GM10248 (cell line): ENCODE measurements at regions of chr22 and their contacts with region 1.

Region 1: DNA sequence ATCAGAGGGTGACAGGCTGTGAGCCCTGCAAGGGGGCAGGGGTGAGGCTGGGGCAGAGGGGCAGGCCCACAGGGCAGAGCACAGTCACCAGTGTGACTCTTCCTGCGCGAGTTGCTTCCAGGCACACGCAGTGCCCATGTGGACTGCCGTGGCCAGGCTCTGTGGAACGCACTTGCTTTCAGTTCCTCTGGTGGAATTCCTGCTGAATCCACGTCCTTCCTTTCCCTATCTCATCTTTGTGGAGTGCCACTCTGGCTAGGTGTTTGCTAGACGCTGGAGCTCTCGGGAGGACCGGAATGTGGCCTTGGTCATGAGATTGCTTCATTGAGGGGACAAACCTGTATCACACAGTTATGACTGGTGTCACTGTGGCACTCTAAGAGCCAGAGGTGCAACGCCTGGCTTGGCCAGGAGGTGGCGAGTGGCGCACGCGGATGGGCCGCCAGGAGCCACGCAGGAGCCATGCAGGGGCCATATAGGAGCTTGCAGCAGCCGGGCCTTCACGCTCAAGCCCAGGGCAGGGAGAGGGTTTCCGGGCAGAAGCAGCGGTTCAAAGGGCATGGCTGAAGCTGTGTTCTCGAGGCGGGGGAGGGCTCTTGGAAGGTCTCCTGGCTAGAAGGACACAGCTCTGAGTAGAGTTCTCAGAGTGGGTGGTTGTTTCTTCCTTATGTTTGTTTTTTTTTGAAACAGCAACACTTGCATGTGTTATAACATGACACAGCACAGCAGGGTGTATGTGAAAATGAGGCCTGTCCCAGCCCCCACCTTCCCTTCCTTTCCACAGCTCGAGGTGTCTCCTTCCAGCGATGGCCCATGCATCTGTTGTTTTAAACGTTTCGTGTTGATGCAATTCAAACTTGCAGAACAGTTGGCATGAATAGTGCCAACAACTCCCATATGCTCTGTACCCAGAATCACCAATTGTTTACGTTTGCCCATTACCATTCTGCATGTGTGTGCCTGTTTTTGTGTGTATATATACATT is 36.2 kb downstream of the TBC1D22A start:
- DNase-seq: peak; percentile 83
- CTCF ChIP-seq: peak; percentile 95

Region 2: GRCh38 chr22:46737976-46738646 is 60.5 kb before region 1 on chr22 and contains the start of gene CERK:
- CTCF ChIA-PET with region 1: interaction called, 21 read pairs
- POLR2A ChIA-PET with region 1: no interaction called
- DNase-seq: peak; percentile 84
- CTCF ChIP-seq: no peak

Region 3: GRCh38 chr22:46769191-46769675 is 29.4 kb before region 1 on chr22:
- CTCF ChIA-PET with region 1: interaction called, 138 read pairs
- POLR2A ChIA-PET with region 1: no interaction called
- DNase-seq: peak; percentile 40
- CTCF ChIP-seq: no peak

Region 4: DNA sequence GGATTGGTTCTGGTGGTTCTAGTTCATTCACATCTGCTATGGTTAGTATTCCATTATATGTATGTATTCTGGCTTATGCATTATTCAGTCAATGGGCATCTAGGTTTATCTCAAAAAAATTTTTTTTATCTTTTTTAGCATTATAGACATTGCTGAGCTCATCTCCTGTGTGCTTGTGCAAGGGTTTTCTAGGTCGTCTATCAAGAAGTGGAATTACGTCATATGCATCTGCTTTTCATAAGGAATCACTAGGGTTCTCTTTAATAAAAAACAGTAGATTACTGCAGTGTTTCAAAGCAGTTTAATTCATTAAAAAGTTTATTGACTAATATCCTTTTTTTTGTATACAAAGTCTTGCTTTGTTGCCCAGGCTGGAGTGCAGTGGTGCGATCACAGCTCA is 14.9 kb before region 1 on chr22:
- CTCF ChIA-PET with region 1: interaction called, 39 read pairs
- POLR2A ChIA-PET with region 1: no interaction called
- DNase-seq: no peak
- CTCF ChIP-seq: no peak

Region 5: DNA sequence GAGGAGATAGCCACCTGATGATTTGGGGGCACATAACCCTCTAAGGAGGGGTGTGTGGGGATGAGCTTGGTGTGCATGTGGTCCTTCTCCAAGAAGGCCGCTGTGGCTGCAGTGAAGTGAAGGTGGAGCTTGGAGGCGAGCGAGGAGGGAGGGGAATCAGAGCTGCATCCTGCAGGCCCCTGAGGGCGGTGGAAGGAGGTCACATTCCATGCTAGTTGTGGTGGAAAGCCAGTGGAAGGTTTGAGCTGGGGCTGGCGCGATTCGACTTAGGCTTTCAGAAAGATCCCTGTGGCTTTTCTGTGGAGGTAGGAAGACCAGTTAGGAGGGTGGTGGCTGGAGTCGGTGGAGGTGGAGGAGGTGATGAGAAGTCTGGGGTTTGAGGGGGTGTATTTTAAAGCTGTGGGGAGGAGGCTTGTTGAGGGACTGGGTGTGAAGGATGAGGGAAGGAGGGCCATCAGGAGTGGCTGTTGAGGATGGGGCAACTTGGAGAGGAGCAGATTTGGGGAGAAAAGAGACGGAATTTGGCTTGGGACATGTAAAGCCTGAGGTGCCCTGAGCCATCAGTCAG is 25.8 kb after region 1 on chr22:
- CTCF ChIA-PET with region 1: interaction called, 40 read pairs
- POLR2A ChIA-PET with region 1: no interaction called
- DNase-seq: no peak
- CTCF ChIP-seq: no peak

Region 6: GRCh38 chr22:47030881-47031627 is 232.4 kb after region 1 on chr22:
- CTCF ChIA-PET with region 1: no interaction called
- POLR2A ChIA-PET with region 1: no interaction called
- DNase-seq: no peak
- CTCF ChIP-seq: no peak

Region 7: DNA sequence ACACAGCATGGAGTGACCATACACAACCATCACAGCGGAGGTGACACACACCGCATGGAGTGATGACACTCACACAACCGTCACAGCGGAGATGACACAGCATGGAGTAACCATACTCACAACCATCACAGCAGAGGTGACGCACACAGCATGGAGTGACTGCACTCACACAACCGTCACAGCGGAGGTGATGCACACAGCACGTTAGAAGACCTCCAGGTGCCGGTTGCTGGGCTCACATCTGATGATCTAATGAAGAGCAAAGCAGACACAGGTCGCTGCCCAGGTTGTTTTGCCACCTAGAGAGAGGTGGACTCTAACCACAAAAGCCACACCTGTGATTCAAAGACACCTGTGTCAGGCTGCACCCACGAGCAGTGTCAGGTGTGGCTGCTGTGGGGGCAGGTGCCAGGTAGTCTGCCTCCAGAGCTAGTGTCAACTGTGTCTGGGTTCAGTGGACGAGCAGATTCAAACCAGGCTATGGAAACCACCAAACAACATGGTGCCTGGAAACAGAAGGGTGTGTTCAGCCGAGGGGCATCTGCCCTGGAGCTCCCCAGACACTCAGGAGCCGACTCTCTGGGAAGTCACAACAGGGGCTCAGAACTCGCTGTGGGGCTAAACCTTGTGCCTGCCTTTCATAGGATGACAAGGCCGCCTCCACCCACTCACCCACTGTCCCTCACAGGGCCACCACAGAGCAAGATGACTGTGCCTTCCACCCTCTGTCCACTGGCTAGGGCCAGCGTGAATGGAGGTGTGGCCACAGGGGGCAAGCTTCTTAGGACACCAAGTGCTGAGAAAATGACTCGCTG is 572.0 kb after region 1 on chr22:
- CTCF ChIA-PET with region 1: no interaction called
- POLR2A ChIA-PET with region 1: no interaction called
- DNase-seq: no peak
- CTCF ChIP-seq: no peak